ENCODE measurements at regions of chr7 and their contacts with region 1.

Region 1: DNA sequence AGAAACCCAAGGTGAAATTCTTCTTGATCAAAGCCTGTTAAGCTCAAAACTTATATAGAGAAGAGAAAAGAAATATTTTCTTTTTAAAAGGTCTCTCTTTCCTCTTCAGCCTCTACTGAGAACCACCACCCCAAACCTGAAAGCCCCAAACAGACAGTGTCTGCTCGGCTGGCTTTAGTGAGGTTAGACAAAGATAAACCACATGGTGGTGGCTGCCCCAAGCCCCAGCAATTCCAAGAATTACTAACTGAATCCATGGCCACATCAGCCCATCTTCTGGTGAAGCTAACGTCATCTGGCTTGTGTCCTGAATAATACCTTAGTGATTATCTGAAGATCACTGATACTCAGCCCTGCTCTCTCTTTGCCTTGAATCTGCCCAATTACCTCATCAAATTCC is 275.0 kb downstream of the ELMO1 start:
- DNase-seq: no peak

Region 2: DNA sequence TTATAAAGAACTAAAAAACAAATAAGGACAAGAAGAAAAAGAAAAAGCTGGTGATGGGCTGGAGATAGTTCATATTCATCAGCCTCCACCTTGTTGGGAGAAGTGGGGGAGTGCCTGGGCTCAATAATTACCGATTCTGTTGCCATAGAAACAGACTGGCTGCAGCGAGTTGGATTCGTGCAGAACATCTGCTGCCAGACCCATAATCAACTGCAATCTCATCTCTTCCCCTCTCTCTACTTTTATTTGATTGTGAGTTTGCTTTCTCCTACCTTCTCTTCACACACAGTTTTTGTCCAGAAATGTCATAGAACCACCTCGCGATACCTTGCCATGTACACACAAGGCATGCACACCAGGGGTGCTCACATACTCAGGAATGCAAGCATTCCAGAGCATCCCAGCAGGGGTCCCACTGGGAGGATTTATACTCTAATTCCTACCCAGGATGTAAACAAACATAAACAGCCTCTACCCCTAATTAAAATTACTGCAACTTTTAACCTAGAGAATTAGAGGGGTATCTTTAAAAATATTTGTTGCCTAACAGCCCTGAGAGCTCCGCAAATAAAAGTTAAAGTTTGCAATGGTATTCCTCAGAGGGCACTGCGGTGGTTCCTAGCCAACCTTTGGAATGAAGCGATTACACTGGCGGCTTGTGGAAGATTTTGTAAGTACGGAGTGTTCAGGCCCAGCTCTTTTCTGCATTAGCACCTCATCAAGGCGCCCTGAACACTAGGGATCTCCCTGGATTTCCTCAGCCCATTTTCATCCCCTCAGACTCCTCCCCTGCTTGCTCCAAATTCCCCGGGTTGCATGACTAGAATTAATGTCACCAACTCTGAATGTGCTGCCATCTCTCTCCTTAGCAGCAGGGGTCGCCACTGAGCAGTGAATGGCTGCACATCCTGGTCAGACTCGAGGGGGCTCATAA is 187.0 kb before region 1 on chr7:
- in situ Hi-C with region 1: loop called (anchors 25 kb)
- DNase-seq: peak; percentile 61

Measured in ACHN (cell line).